ENCODE measurements at regions of chr2 and their contacts with region 1.

Region 1: DNA sequence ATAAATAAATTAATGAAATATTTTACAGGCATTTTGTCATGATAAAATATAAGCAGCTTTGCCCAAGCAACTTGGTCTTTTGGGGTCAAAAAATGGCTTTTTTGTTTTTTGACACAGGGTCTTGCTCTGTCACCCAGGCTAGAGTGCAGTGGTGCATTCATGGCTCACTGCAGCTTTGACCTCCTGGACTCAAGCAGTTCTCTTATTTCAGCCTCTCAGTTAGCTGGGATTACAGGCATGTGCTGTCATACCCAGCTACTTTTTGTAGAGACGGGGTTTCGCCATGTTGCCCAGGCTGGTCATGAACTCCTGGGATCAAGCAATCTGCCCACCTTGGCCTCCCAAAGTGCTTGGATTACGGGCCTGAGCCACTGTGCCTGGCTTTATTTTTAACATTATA is 51.0 kb downstream of the ABI2 start:
- DNase-seq: no peak
- H3K4me3 ChIP-seq: no peak overlapping the region
- H3K27ac ChIP-seq: no peak overlapping the region
- H3K4me1 ChIP-seq: no peaks in the 10 kb centered on the region
- H3K27me3 ChIP-seq: no peaks in the 10 kb centered on the region
- CTCF ChIP-seq: no peak
- EP300 ChIP-seq: no peak
- POLR2A ChIP-seq: no peak

Region 2: DNA sequence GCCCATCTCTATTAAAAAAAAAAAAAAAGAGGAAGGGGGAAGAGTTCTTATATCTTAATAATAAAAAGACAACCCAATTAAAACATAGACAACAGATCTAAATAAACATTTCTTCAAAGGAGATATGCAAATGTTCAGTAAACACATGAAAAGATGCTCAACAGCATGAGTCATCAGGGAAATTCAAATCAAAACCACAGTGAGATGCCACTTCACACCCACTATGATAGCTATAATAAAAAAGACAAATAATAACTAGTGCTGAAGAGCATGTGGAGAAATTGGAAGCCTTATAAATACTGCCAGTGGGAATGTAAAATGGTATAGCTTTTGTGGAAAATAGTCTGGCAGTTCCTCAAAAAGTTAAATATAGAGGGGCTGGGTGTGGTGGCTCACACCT is 201.8 kb before region 1 on chr2:
- in situ Hi-C with region 1: no loop called
- intact Hi-C with region 1: no loop called
- DNase-seq: no peak
- H3K4me3 ChIP-seq: no peak overlapping the region
- H3K27ac ChIP-seq: no peak overlapping the region
- H3K4me1 ChIP-seq: no peaks in the 10 kb centered on the region
- H3K27me3 ChIP-seq: no peaks in the 10 kb centered on the region
- CTCF ChIP-seq: no peak
- EP300 ChIP-seq: no peak
- POLR2A ChIP-seq: no peak

Region 3: GRCh38 chr2:203341741-203342310 is 37.3 kb before region 1 on chr2:
- in situ Hi-C with region 1: no loop called
- intact Hi-C with region 1: loop called (anchors 2 kb)
- DNase-seq: no peak
- H3K4me3 ChIP-seq: no peak overlapping the region
- H3K27ac ChIP-seq: no peak overlapping the region
- H3K4me1 ChIP-seq: peaks cover 0 to 11% (median 2%) of the 10 kb centered on the region in 4 donors
- H3K27me3 ChIP-seq: no peaks in the 10 kb centered on the region
- CTCF ChIP-seq: no peak
- EP300 ChIP-seq: no peak
- POLR2A ChIP-seq: no peak

Region 4: GRCh38 chr2:203498161-203498560 is 119.0 kb after region 1 on chr2:
- in situ Hi-C with region 1: no loop called
- intact Hi-C with region 1: no loop called
- DNase-seq: no peak
- H3K4me3 ChIP-seq: no peak overlapping the region
- H3K27ac ChIP-seq: peak overlapping the region; percentile 28 to 68 (median 61)
- H3K4me1 ChIP-seq: peaks cover 0 to 23% (median 9%) of the 10 kb centered on the region in 4 donors
- H3K27me3 ChIP-seq: no peaks in the 10 kb centered on the region
- CTCF ChIP-seq: no peak
- EP300 ChIP-seq: no peak
- POLR2A ChIP-seq: no peak

Measured in transverse colon (tissue), 4 donors.